ENCODE measurements at regions of chr19 and their contacts with region 1.

Region 1: DNA sequence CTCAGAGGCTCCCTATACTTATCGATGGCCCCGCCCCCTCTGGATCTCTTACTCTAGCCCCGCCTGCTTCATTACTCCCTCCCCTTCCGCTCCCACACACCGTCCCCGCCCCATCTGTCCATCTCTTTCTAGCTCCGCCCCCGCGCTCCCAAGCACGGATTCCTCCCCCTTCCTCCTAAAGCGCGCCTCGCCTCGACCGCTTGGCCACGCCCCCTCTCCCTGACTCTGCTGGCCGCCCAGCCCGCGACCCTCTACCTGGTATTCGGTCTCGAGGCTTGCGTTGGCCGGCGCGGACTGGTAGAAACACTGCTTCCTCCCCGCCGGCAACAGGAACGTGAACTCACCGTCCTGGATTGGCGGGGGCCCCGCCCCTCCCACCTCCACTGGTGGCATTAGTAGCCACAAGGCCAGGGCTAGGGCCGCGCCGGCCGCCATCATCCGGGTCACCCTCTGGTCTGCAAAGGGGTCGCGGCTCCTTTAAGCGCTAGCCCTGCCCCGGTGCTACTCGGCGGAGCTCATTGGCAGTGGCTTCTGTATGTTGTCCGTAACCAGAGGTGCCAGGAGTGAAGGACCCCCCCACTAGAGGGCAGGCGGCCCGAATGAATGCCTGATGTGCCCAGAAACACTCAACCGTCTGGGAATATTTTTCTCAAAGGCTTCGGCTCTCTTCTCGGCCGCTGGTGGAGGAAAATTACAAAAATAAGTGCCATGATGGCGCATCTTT is at the start of gene TMED1:
- DNase-seq: peak; percentile 97
- H3K4me3 Mint-ChIP-seq: peak within 1 kb of the TSS; percentile 80
- H3K27ac Mint-ChIP-seq: peak within 1 kb of the TSS; percentile 85
- H3K4me1 Mint-ChIP-seq: no peaks in the 10 kb centered on the region
- H3K27me3 Mint-ChIP-seq: no peaks in the 10 kb centered on the region
- CTCF ChIP-seq: no peak
- total RNA-seq, gene TMED1: 20.7 and 22.6 TPM in 2 replicates

Region 2: GRCh38 chr19:10858204-10858828 is 22.4 kb after region 1 on chr19:
- CTCF ChIA-PET with region 1: interaction called, 21 read pairs
- intact Hi-C with region 1: no loop called
- DNase-seq: no peak
- H3K4me3 Mint-ChIP-seq: no peak overlapping the region
- H3K27ac Mint-ChIP-seq: no peak overlapping the region
- H3K4me1 Mint-ChIP-seq: peaks cover 9% of the 10 kb centered on the region
- H3K27me3 Mint-ChIP-seq: no peaks in the 10 kb centered on the region
- CTCF ChIP-seq: peak; percentile 62

Region 3: GRCh38 chr19:10864538-10864899 is 28.6 kb after region 1 on chr19:
- CTCF ChIA-PET with region 1: interaction called, 21 read pairs
- intact Hi-C with region 1: no loop called
- DNase-seq: peak; percentile 81
- H3K4me3 Mint-ChIP-seq: no peak overlapping the region
- H3K27ac Mint-ChIP-seq: no peak overlapping the region
- H3K4me1 Mint-ChIP-seq: peaks cover 11% of the 10 kb centered on the region
- H3K27me3 Mint-ChIP-seq: no peaks in the 10 kb centered on the region
- CTCF ChIP-seq: peak; percentile 62

Region 4: DNA sequence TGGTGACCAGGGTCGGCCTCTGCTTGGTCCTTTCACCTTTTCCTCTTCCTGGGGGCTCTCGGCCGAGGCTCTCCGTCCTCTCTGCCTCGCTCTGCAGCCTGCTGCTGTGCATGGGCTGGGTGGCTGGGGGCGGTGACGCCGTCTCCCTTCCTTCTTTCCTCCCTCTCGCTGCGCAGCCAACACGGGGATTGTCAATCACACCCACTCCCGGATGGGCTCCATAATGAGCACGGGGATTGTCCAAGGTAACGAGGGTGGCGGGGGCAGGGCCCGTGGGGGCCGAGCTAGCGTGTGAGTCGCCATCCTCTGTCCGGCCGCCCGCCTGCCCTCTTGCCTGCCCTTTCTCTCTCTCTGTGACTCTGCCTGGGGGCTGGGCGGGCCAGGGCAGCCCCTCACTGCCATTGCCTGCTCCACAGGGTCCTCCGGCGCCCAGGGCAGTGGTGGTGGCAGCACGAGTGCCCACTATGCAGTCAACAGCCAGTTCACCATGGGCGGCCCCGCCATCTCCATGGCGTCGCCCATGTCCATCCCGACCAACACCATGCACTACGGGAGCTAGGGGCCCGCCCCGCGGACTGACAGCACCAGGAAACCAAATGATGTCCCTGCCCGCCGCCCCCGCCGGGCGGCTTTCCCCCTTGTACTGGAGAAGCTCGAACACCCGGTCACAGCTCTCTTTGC is 85.4 kb after region 1 on chr19:
- CTCF ChIA-PET with region 1: no interaction called
- intact Hi-C with region 1: no loop called
- DNase-seq: no peak
- H3K4me3 Mint-ChIP-seq: no peak overlapping the region
- H3K27ac Mint-ChIP-seq: peak overlapping the region; percentile 60
- H3K4me1 Mint-ChIP-seq: no peaks in the 10 kb centered on the region
- H3K27me3 Mint-ChIP-seq: no peaks in the 10 kb centered on the region
- CTCF ChIP-seq: no peak